GM12878 (cell line): ENCODE measurements at regions of chr14 and their contacts with region 1.

Region 1: GRCh38 chr14:63770187-63770807 is 42.4 kb upstream of the SGPP1 start:
- DNase-seq: no peak
- ATAC-seq: peak; percentile 94
- H3K4me3 ChIP-seq: no peak overlapping the region
- H3K27ac ChIP-seq: no peak overlapping the region
- H3K4me1 ChIP-seq: peaks cover 9% of the 10 kb centered on the region
- H3K27me3 ChIP-seq: no peaks in the 10 kb centered on the region
- CTCF ChIP-seq: peak; percentile 62 to 76 (median 67)
- EP300 ChIP-seq: no peak
- POLR2A ChIP-seq: no peak
- RAD21 ChIP-seq: peak; percentile 87

Region 2: DNA sequence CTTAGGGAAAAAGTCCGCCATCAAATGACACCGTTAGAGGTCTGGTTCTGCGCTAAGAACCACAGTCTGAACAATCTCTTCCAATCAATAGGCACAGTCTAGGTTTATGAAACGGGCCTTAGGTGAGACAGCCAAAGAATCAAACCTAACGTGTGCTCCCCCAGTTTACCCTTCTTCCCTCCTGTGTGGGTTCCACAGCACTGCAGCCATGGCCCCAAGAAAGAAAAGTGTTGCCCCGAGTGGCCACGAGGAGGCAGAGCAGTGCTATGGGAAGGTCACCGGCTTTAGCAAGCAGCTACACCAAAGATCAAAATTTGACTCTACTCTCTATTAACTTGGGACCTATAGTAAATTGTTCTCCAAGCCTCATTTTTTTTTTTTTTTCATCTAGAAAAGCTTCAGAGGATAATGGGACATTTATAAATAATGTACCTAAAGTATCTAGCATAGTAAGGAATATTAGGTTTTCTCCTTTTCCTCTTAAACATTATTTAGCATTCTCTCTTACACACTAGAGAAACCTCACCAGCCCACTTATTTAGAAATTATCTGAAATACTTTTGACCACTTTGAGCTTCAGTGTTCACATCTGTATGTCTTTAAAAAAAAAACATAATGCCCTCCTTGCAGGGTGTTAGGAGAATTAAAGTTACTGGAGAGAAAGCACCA is 381.4 kb before region 1 on chr14:
- CTCF ChIA-PET with region 1: interaction called, 38 read pairs
- POLR2A ChIA-PET with region 1: no interaction called
- RAD21 ChIA-PET with region 1: interaction called, 14 read pairs
- SMC1A ChIA-PET with region 1: interaction called, 17 read pairs
- in situ Hi-C with region 1: loop called (anchors 5 kb)
- intact Hi-C with region 1: loop called (anchors 2 kb)
- DNase-seq: peak; percentile 24
- ATAC-seq: peak; percentile 98
- H3K4me3 ChIP-seq: no peak overlapping the region
- H3K27ac ChIP-seq: no peak overlapping the region
- H3K4me1 ChIP-seq: peaks cover 2% of the 10 kb centered on the region; the same call in 1 of the 2 replicates
- H3K27me3 ChIP-seq: no peaks in the 10 kb centered on the region
- CTCF ChIP-seq: peak; percentile 88 to 89 (median 88)
- EP300 ChIP-seq: no peak
- POLR2A ChIP-seq: no peak
- RAD21 ChIP-seq: peak; percentile 96

Region 3: GRCh38 chr14:63632932-63633514 is 137.3 kb before region 1 on chr14:
- CTCF ChIA-PET with region 1: interaction called, 68 read pairs
- POLR2A ChIA-PET with region 1: interaction called, 7 read pairs
- RAD21 ChIA-PET with region 1: interaction called, 31 read pairs
- SMC1A ChIA-PET with region 1: interaction called, 53 read pairs
- in situ Hi-C with region 1: loop called (anchors 5 kb)
- intact Hi-C with region 1: loop called (anchors 1 kb)
- DNase-seq: no peak
- ATAC-seq: peak; percentile 94
- H3K4me3 ChIP-seq: no peak overlapping the region
- H3K27ac ChIP-seq: no peak overlapping the region
- H3K4me1 ChIP-seq: no peaks in the 10 kb centered on the region
- H3K27me3 ChIP-seq: no peaks in the 10 kb centered on the region
- CTCF ChIP-seq: peak; percentile 48 to 60 (median 48); a peak in 5 of 6 replicates
- EP300 ChIP-seq: no peak
- POLR2A ChIP-seq: no peak
- RAD21 ChIP-seq: peak; percentile 60

Region 4: GRCh38 chr14:63650256-63650952 is 119.9 kb before region 1 on chr14:
- CTCF ChIA-PET with region 1: interaction called, 7 read pairs
- POLR2A ChIA-PET with region 1: no interaction called
- RAD21 ChIA-PET with region 1: interaction called, 17 read pairs
- SMC1A ChIA-PET with region 1: interaction called, 14 read pairs
- in situ Hi-C with region 1: no loop called
- intact Hi-C with region 1: no loop called
- DNase-seq: peak; percentile 54
- ATAC-seq: peak; percentile 90
- H3K4me3 ChIP-seq: no peak overlapping the region
- H3K27ac ChIP-seq: peak overlapping the region; percentile 17; the same call in 1 of the 2 replicates
- H3K4me1 ChIP-seq: no peaks in the 10 kb centered on the region
- H3K27me3 ChIP-seq: no peaks in the 10 kb centered on the region
- CTCF ChIP-seq: no peak
- EP300 ChIP-seq: no peak
- POLR2A ChIP-seq: no peak
- RAD21 ChIP-seq: no peak

Region 5: DNA sequence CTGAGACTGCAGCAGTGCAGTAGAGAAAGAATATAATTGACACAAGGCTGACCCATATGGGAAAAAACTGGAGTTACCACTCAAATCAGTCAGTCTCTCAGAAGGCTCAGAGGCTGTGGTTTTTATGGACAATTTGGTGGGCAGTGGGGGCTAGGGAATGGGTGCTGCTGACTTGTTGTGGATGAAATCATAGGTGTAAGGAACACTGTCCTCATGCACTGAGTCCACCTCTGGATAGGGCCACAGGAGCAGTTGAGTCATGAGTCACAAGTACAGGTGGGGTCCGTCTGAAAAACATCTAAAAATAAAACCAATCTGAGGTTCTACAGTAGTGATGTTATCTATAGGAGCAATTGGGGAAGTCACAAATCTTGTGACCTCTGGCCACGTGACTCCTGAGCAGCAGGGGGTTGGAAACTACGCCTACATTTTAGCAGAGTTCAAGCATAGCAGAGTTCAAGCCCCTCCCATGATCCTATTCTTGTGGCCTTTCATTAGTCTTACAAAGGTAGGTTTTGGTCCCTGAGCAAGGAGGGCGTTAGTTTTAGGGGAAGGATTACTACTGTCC is 24.4 kb before region 1 on chr14:
- CTCF ChIA-PET with region 1: interaction called, 9 read pairs
- POLR2A ChIA-PET with region 1: interaction called, 7 read pairs
- RAD21 ChIA-PET with region 1: interaction called, 19 read pairs
- SMC1A ChIA-PET with region 1: interaction called, 7 read pairs
- in situ Hi-C with region 1: no loop called
- intact Hi-C with region 1: loop called (anchors 1 kb)
- DNase-seq: peak; percentile 80
- ATAC-seq: peak; percentile 76
- H3K4me3 ChIP-seq: no peak overlapping the region
- H3K27ac ChIP-seq: peak overlapping the region; percentile 75
- H3K4me1 ChIP-seq: peaks cover 36% of the 10 kb centered on the region
- H3K27me3 ChIP-seq: no peaks in the 10 kb centered on the region
- CTCF ChIP-seq: peak in 2 of 3 experiments; percentile 8 to 9; a peak in 1 of 6 replicates
- EP300 ChIP-seq: peak; percentile 38 to 65; a peak in 3 of 4 replicates
- POLR2A ChIP-seq: 0 out of 2 replicates have a peak, but pooled peaks have one; percentile 33
- RAD21 ChIP-seq: 0 out of 2 replicates have a peak, but pooled peaks have one; percentile 31

Region 6: GRCh38 chr14:63759456-63759855 is 10.8 kb before region 1 on chr14:
- CTCF ChIA-PET with region 1: interaction called, 12 read pairs
- POLR2A ChIA-PET with region 1: interaction called, 4 read pairs
- RAD21 ChIA-PET with region 1: interaction called, 4 read pairs
- SMC1A ChIA-PET with region 1: interaction called, 11 read pairs
- in situ Hi-C with region 1: no loop called
- intact Hi-C with region 1: no loop called
- DNase-seq: peak; percentile 38
- ATAC-seq: peak; percentile 95
- H3K4me3 ChIP-seq: peak overlapping the region; percentile 46; the same call in 1 of the 2 replicates
- H3K27ac ChIP-seq: peak overlapping the region; percentile 82
- H3K4me1 ChIP-seq: peaks cover 6% of the 10 kb centered on the region; the same call in 1 of the 2 replicates
- H3K27me3 ChIP-seq: no peaks in the 10 kb centered on the region
- CTCF ChIP-seq: no peak
- EP300 ChIP-seq: no peak
- POLR2A ChIP-seq: no peak
- RAD21 ChIP-seq: no peak

Region 7: GRCh38 chr14:63833728-63834127 is 63.4 kb after region 1 on chr14:
- CTCF ChIA-PET with region 1: no interaction called
- POLR2A ChIA-PET with region 1: no interaction called
- RAD21 ChIA-PET with region 1: no interaction called
- SMC1A ChIA-PET with region 1: no interaction called
- in situ Hi-C with region 1: no loop called
- intact Hi-C with region 1: no loop called
- DNase-seq: no peak
- ATAC-seq: no peak
- H3K4me3 ChIP-seq: no peak overlapping the region
- H3K27ac ChIP-seq: no peak overlapping the region
- H3K4me1 ChIP-seq: no peaks in the 10 kb centered on the region
- H3K27me3 ChIP-seq: no peaks in the 10 kb centered on the region
- CTCF ChIP-seq: no peak
- EP300 ChIP-seq: no peak
- POLR2A ChIP-seq: no peak
- RAD21 ChIP-seq: no peak